ENCODE measurements at regions of chr3 and their contacts with region 1.

Region 1: DNA sequence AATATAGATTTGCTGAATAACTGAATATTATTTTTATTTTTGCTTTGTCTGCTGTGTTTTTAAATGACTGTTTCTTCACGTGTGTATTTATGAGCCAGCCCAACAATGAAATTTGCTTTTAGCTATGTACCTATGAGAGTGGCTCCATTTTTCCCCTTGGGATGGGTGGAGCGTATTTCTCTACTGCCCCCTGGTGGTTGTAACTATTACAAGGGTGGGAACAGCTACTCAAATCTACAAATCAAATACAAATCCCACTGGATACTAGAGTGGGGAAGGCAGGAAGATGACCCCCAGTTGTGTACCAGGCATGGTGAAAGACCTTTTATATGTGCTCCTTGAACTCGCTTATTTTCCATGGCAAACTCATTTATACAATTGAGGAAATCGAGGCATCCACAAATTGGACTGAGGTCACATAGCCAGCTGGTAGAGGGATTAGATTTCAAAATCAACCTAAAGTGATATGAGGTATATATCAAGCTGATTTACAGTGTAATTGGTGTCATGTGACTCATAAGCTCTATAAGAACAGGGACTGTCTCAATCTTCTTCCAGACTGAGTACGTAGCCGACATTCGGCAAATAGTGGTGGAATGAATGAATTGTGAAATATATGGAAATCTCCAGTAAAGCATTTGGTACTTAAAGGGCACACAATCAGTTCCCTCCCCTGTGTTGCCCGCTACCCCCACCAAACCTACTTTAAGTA is 69.5 kb upstream of the VEPH1 start:
- DNase-seq: peak; percentile 17
- H3K4me3 Mint-ChIP-seq: no peak overlapping the region
- H3K27ac Mint-ChIP-seq: no peak overlapping the region
- H3K4me1 Mint-ChIP-seq: no peaks in the 10 kb centered on the region
- H3K27me3 Mint-ChIP-seq: peaks cover 10% of the 10 kb centered on the region

Region 2: DNA sequence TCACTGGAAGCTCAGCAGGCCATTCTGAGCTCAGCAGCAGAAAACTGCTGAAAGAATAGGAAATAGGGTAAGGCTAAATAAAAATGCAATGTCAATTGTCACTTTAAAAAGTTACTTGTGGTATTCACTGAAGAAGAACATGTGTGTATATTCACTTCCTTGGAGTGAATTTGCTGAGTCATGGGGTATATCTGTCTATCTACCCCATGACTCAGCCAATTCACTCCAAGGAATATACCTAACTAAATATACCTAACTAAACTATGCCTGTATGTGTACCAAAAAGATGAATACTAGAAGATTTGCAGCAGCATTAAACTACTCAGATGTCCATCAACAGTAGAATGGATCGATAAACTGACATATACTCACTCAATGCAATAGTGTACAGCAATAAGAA is 1521.8 kb before region 1 on chr3:
- CTCF ChIA-PET with region 1: no interaction called
- POLR2A ChIA-PET with region 1: no interaction called
- intact Hi-C with region 1: no loop called
- DNase-seq: no peak
- H3K4me3 Mint-ChIP-seq: no peak overlapping the region
- H3K27ac Mint-ChIP-seq: no peak overlapping the region
- H3K4me1 Mint-ChIP-seq: no peaks in the 10 kb centered on the region
- H3K27me3 Mint-ChIP-seq: peaks cover 10% of the 10 kb centered on the region

Region 3: DNA sequence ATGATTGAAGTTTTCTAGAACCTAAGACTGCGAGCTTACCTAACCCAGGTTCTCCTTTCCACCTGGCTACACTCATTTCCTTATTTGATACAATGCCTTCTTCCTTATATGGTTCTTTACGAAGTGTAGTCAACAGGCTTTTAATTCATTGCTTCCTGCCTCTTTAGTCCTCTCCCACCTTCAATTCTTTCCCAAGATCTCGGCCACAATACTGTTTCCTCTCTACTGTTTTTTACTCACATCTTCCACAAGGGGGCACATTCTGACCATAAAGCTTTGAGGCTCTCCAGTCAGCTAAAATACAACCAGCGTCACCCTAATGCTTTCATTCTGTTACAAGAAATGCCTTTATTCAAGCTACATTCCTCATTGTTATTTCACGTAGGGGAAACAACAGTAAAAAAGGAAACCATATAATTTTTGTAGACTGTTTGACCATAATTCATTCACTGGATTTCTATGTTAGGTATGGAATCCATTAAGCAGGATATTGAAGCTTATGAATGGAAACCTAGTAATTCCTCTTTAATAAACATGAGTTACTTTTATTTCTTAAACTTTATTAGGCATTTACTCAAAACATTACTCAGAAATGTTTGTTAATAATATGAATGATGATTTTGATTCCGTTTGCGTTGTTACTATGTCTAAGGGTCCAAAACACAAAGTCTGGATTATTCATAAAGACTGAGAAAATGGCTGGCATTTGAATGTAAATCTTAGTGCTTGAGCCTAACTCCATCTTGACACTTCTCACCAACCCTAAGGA is 40.0 kb before region 1 on chr3:
- CTCF ChIA-PET with region 1: interaction called, 147 read pairs
- POLR2A ChIA-PET with region 1: no interaction called
- intact Hi-C with region 1: loop called (anchors 1 kb)
- DNase-seq: no peak
- H3K4me3 Mint-ChIP-seq: no peak overlapping the region
- H3K27ac Mint-ChIP-seq: no peak overlapping the region
- H3K4me1 Mint-ChIP-seq: no peaks in the 10 kb centered on the region
- H3K27me3 Mint-ChIP-seq: no peaks in the 10 kb centered on the region

Region 4: GRCh38 chr3:157542711-157543500 is 29.8 kb before region 1 on chr3:
- CTCF ChIA-PET with region 1: interaction called, 147 read pairs
- POLR2A ChIA-PET with region 1: no interaction called
- intact Hi-C with region 1: no loop called
- DNase-seq: no peak
- H3K4me3 Mint-ChIP-seq: no peak overlapping the region
- H3K27ac Mint-ChIP-seq: no peak overlapping the region
- H3K4me1 Mint-ChIP-seq: no peaks in the 10 kb centered on the region
- H3K27me3 Mint-ChIP-seq: peaks cover 24% of the 10 kb centered on the region